Right cardiac atrium (tissue), 5 donors: ENCODE measurements at regions of chrX and their contacts with region 1.

Region 1: GRCh38 chrX:110146521-110146920 is 143.6 kb downstream of the TMEM164 start:
- DNase-seq: no peak
- ATAC-seq: peak; percentile 70 to 73
- H3K4me3 ChIP-seq: no peak overlapping the region
- H3K27ac ChIP-seq: no peak overlapping the region
- H3K4me1 ChIP-seq: peaks cover 10% of the 10 kb centered on the region
- H3K27me3 ChIP-seq: no peaks in the 10 kb centered on the region

Region 2: GRCh38 chrX:109856974-109857373 is 289.5 kb before region 1 on chrX:
- intact Hi-C with region 1: no loop called
- DNase-seq: no peak
- ATAC-seq: no peak
- H3K4me3 ChIP-seq: no peak overlapping the region
- H3K27ac ChIP-seq: no peak overlapping the region
- H3K4me1 ChIP-seq: no peaks in the 10 kb centered on the region
- H3K27me3 ChIP-seq: no peaks in the 10 kb centered on the region

Region 3: GRCh38 chrX:109902665-109903064 is 243.9 kb before region 1 on chrX:
- intact Hi-C with region 1: loop called in 2 of 4 experiments (anchors 5 to 10 kb)
- DNase-seq: no peak
- ATAC-seq: no peak
- H3K4me3 ChIP-seq: no peak overlapping the region
- H3K27ac ChIP-seq: no peak overlapping the region
- H3K4me1 ChIP-seq: no peaks in the 10 kb centered on the region
- H3K27me3 ChIP-seq: no peaks in the 10 kb centered on the region

Region 4: DNA sequence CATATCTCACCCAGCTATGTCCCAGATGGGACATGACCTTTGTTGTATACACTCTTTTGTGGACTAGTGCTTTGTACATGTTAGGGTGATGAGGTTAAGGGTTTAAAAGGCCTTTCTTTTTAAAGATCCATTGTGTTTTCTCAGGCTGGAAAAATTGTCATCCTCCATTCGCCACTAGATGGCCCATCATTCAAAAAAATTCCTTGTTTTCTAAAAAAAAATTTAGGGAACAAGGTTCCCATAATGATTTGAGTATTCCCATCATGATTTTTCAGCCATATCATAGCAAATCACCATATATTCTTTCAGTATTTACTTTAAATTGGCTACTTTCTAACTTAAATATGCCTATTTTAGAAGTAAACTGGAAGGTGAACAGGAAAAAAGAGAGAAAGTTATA is 235.5 kb before region 1 on chrX:
- intact Hi-C with region 1: loop called (anchors 5 to 10 kb)
- DNase-seq: no peak
- ATAC-seq: no peak
- H3K4me3 ChIP-seq: no peak overlapping the region
- H3K27ac ChIP-seq: no peak overlapping the region
- H3K4me1 ChIP-seq: no peaks in the 10 kb centered on the region
- H3K27me3 ChIP-seq: no peaks in the 10 kb centered on the region